ENCODE measurements at regions of chr1 and their contacts with region 1.

Region 1: DNA sequence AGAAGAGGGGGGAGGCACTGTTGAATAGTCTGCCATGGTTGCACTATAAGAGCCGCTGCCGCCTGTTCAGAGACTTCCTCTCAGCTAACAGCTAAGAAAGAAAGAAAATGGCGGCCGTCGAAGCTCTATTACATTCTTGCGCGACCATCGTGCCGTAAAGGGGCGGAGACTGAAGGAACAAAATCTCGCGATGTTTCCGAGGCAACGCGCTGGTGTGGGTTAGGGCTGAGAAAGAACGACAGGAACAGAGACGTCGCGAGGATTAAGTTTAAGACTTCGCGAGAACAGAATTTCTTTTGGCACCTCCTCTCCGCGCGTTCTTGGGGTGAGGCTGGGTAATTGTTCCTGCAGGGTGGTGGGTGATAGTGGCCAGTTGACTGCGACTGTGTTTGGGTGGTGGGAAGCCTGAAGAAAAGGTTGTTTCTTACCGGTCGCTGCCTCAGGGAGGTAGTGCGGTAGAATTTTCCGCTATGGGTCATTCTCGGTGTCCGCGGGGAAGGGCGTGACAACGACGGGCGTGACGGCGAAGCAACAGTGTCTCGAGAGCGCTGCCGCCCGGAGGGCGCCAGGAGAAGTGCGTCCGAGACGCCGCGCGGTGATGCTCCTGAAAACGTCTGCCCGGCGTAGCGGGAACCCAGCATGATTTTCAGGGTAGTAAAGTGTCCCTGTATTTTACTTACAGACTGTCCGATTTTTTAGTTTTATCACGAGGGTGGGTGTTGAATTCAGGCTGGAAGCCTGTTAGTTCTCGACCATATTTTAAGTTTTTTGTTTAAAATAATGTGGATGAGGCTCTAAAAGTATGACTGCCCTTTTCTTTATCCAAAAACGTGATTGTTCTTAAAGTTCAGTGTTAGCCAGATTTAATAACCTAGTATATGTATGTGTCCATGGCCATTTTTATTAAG is at the start of gene FUBP1:
- DNase-seq: peak; percentile 92 to 97
- H3K4me3 ChIP-seq: peak within 1 kb of the TSS; percentile 95 to 100 (median 99)
- H3K27ac ChIP-seq: peak within 1 kb of the TSS; percentile 98
- H3K4me1 ChIP-seq: peaks cover 0 to 12% (median 7%) of the 10 kb centered on the region in 4 experiments; a peak in 3 of 7 replicates
- H3K27me3 ChIP-seq: no peaks in the 10 kb centered on the region
- CTCF ChIP-seq: peak; percentile 50 to 71 (median 67)
- EP300 ChIP-seq: 0 out of 3 replicates have a peak, but pooled peaks of 1 of the 2 experiments have one; percentile 47
- POLR2A ChIP-seq: peak; percentile 86 to 98; a peak in 2 of 3 replicates
- RAD21 ChIP-seq: peak; percentile 23 to 36
- total RNA-seq, gene FUBP1: 201 and 206 TPM in 2 replicates

Region 2: DNA sequence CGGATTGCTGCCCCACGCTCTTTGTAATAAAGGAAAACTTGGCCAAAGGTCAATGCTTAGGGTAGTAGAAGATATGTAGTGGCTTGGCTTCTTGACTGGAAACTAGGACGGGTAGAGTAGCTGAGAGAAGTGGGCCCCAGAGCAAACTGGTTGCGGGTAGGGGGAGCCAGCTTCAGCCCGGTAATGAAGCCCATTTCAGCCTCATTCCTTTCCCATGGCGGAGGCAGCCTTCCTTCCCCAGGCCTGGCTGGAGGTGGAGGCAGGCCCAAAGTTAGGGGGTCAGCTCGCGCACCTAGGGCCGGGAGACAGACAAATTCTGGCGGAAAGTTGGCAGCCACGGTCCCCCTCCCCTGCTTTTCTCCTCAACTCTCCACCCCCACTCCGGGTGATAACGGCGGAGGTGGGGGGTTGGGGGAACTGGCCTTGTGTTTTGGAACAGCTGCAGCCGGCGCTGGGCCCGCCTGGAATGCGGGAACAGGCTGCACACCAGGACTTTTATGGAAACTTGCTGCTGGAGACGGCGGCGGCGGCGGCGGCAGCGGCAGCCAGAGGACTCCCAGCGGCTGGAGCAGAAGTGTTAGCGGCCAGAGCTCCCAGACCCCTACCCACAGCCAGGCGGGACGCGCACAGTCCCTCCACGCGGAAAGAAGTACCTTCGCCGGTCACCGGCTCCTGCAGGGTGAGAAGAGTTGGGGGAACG is 91.0 kb before region 1 on chr1 and contains the start of gene NEXN:
- CTCF ChIA-PET with region 1: interaction called, 3 read pairs
- POLR2A ChIA-PET with region 1: interaction called, 10 read pairs
- DNase-seq: peak; percentile 53 to 81
- H3K4me3 ChIP-seq: peak within 1 kb of the TSS; percentile 70 to 93 (median 90)
- H3K27ac ChIP-seq: peak within 1 kb of the TSS; percentile 46; the same call in 1 of the 2 replicates
- H3K4me1 ChIP-seq: peaks cover 0 to 3% (median 0%) of the 10 kb centered on the region in 4 experiments; a peak in 1 of 7 replicates
- H3K27me3 ChIP-seq: no peaks in the 10 kb centered on the region
- CTCF ChIP-seq: no peak
- EP300 ChIP-seq: peak in 1 of 2 experiments; percentile 66; a peak in 1 of 3 replicates
- POLR2A ChIP-seq: peak; percentile 49 to 73
- RAD21 ChIP-seq: no peak
- total RNA-seq, gene NEXN: 2.6 and 2.9 TPM in 2 replicates

Region 3: DNA sequence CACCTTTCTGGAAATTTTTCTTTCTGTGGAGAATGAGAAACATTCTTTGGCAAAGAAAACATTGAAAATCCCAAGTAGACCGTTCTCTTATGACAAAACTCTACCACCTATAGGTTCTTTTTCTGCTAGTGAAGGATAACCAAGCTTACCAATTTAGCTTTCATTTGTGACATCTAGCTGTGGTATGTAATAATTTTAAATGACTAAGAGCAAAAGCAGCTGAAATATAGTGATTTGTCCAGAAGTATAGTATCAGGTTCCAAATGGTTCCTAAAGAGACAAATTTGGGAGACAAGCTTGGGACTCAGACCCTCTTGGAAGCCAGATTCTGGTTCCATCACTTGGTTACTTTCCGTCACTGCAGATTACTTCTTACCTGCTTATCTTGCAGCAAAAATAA is 24.7 kb before region 1 on chr1:
- CTCF ChIA-PET with region 1: no interaction called
- POLR2A ChIA-PET with region 1: interaction called, 17 read pairs
- DNase-seq: no peak
- H3K4me3 ChIP-seq: no peak overlapping the region
- H3K27ac ChIP-seq: no peak overlapping the region
- H3K4me1 ChIP-seq: no peaks in the 10 kb centered on the region
- H3K27me3 ChIP-seq: no peaks in the 10 kb centered on the region
- CTCF ChIP-seq: no peak
- EP300 ChIP-seq: no peak
- POLR2A ChIP-seq: no peak
- RAD21 ChIP-seq: no peak

Region 4: GRCh38 chr1:78004719-78005447 is 25.7 kb after region 1 on chr1 and contains the start of gene DNAJB4:
- CTCF ChIA-PET with region 1: interaction called, 3 read pairs
- POLR2A ChIA-PET with region 1: interaction called, 180 read pairs
- DNase-seq: no peak
- H3K4me3 ChIP-seq: peak within 1 kb of the TSS in 3 of 4 experiments; percentile 11 to 53 (median 34); a peak in 4 of 8 replicates
- H3K27ac ChIP-seq: peak within 1 kb of the TSS; percentile 69; the same call in 1 of the 2 replicates
- H3K4me1 ChIP-seq: peaks cover 0 to 5% (median 3%) of the 10 kb centered on the region in 4 experiments; a peak in 3 of 7 replicates
- H3K27me3 ChIP-seq: no peaks in the 10 kb centered on the region
- CTCF ChIP-seq: no peak
- EP300 ChIP-seq: no peak
- POLR2A ChIP-seq: no peak
- RAD21 ChIP-seq: no peak
- total RNA-seq, gene DNAJB4: 20.2 and 21.8 TPM in 2 replicates

Region 5: GRCh38 chr1:78060857-78061563 is 81.8 kb after region 1 on chr1:
- CTCF ChIA-PET with region 1: interaction called, 3 read pairs
- POLR2A ChIA-PET with region 1: interaction called, 11 read pairs
- DNase-seq: no peak
- H3K4me3 ChIP-seq: no peak overlapping the region
- H3K27ac ChIP-seq: no peak overlapping the region
- H3K4me1 ChIP-seq: no peaks in the 10 kb centered on the region
- H3K27me3 ChIP-seq: no peaks in the 10 kb centered on the region
- CTCF ChIP-seq: peak in 1 of 3 experiments; percentile 14; a peak in 1 of 4 replicates
- EP300 ChIP-seq: no peak
- POLR2A ChIP-seq: no peak
- RAD21 ChIP-seq: no peak

Measured in H1 (cell line).